Body of pancreas (tissue), 4 donors: ENCODE measurements at regions of chr14 and their contacts with region 1.

Region 1: GRCh38 chr14:104094709-104095438 is 9.4 kb downstream of the ASPG start:
- DNase-seq: peak; percentile 61 to 82 (median 76)
- ATAC-seq: peak; percentile 77
- H3K4me3 ChIP-seq: no peak overlapping the region
- H3K27ac ChIP-seq: no peak overlapping the region
- H3K4me1 ChIP-seq: peaks cover 7% of the 10 kb centered on the region
- H3K27me3 ChIP-seq: no peaks in the 10 kb centered on the region
- CTCF ChIP-seq: peak; percentile 77 to 98 (median 87)
- POLR2A ChIP-seq: no peak

Region 2: DNA sequence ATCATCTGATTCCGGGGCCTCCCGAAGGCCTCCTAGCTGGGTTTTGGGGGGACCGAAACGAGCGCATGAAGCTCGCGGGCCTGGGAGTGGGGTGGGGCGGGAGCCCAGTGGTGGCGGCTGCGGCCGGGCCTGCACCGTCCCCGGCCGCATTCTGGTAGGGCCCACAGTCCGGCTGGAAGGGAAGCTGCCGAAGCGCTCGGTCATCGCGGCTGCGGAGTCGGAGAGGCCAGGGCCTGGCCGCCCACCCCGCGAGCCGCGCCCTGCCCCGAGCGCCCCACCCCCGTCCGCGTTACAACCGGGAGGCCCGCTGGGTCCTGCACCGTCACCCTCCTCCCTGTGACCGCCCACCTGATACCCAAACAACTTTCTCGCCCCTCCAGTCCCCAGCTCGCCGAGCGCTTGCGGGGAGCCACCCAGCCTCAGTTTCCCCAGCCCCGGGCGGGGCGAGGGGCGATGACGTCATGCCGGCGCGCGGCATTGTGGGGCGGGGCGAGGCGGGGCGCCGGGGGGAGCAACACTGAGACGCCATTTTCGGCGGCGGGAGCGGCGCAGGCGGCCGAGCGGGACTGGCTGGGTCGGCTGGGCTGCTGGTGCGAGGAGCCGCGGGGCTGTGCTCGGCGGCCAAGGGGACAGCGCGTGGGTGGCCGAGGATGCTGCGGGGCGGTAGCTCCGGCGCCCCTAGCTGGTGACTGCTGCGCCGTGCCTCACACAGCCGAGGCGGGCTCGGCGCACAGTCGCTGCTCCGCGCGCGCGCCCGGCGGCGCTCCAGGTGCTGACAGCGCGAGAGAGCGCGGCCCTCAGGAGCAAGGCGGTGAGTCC is 466.0 kb before region 1 on chr14 and contains the start of gene KLC1:
- intact Hi-C with region 1: no loop called
- DNase-seq: peak; percentile 77 to 84 (median 82)
- ATAC-seq: peak; percentile 86
- H3K4me3 ChIP-seq: peak within 1 kb of the TSS; percentile 97 to 98
- H3K27ac ChIP-seq: peak within 1 kb of the TSS; percentile 76 to 97 (median 95)
- H3K4me1 ChIP-seq: peaks cover 30% of the 10 kb centered on the region
- H3K27me3 ChIP-seq: no peaks in the 10 kb centered on the region
- CTCF ChIP-seq: no peak
- POLR2A ChIP-seq: peak; percentile 63 to 81 (median 76)
- total RNA-seq, gene KLC1: 199 to 292 TPM

Region 3: GRCh38 chr14:104130974-104131651 is 36.2 kb after region 1 on chr14:
- intact Hi-C with region 1: loop called (anchors 5 kb)
- DNase-seq: peak; percentile 74 to 84 (median 79)
- ATAC-seq: peak; percentile 75
- H3K4me3 ChIP-seq: no peak overlapping the region
- H3K27ac ChIP-seq: no peak overlapping the region
- H3K4me1 ChIP-seq: peaks cover 14% of the 10 kb centered on the region
- H3K27me3 ChIP-seq: peaks cover 0 to 11% of the 10 kb centered on the region in 2 donors
- CTCF ChIP-seq: peak; percentile 53 to 93 (median 83)
- POLR2A ChIP-seq: no peak